AG04449 (cell line): ENCODE measurements at regions of chr7 and their contacts with region 1.

Region 1: DNA sequence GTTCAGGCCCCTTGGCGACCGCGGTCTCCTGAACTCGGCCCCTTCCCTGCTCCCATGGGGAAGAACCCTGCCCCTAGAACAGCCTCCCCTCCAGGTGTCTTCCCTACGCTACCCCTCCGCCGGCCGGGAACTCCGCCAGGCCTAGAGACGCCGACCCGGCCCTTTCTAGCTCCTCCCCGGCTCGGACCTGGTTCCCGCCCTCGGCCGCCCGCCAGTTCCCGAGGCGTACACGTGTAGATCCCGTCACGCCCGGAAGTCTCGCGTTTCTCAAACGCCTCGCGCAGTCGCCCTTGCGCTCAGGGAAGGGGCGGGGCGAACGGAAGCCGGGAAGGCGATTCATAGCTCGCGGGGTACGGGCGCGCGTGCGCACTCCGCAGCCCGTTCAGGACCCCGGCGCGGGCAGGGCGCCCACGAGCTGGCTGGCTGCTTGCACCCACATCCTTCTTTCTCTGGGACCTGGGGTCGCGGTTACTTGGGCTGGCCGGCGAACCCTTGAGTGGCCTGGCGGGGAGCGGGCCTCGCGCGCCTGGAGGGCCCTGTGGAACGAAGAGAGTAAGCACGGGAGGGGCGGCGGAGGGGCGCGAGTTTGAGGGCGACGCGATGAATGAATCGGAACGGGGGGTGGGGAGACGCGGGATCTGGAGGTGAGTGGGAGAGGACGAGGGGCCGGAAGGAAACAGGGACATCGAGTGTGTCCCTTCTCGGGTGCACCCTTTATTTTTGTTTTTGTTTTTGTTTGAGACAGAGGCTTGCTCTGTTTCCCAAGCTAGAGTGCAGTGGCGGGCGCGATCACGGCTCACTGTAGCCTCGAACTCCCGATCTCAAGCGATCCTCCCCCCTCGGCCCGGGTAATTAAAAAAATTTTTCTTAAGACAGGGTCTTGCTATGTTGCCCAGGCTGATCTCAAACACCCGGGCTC is at the start of gene POP7:
- DNase-seq: peak; percentile 88
- H3K4me3 ChIP-seq: peak within 1 kb of the TSS; percentile 92
- CTCF ChIP-seq: no peak

Region 2: GRCh38 chr7:100563809-100564400 is 142.1 kb before region 1 on chr7:
- CTCF ChIA-PET with region 1: interaction called, 13 read pairs
- POLR2A ChIA-PET with region 1: no interaction called
- DNase-seq: no peak
- H3K4me3 ChIP-seq: no peak overlapping the region
- CTCF ChIP-seq: peak; percentile 92

Region 3: DNA sequence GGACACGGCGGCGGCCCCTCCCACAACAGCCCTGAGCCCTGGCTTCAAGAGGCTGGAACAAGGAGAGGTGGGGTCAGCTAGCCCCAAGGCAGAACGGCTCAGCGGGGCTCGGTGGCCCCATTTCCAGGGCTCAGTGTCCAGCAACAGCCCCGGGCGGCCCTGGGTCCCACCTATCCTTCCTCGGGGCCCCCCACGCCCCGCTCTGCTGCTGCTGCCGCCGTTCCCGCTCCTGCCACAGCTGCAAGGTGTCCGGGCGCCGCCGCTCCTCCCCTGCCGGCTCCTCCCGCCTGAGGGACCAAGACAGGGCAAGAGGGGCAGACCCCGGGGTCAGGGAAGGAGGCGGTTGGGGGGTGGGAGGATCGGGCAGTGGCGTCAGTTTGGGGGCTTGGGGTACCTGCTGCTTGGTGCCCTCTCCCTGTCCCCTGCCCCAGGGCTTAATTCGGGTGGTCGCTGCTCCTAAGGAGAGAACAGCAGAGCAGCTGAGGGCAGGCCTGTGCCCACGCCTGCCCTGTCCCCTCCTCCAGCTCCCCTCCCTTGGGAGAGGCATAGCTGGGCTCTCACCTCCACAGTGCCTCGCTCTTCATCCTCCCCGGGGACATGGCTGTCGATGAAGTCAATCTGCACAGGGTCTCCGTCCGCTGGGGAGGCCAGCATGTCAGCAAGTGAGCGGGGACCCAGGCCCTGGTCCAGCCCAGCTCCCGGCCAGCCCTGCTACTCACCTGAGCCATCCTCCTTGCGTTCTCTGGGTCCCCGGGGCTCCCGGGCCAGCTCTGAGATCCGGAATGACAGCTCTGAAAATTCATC is 128.7 kb before region 1 on chr7:
- CTCF ChIA-PET with region 1: no interaction called
- POLR2A ChIA-PET with region 1: no interaction called
- DNase-seq: no peak
- H3K4me3 ChIP-seq: no peak overlapping the region
- CTCF ChIP-seq: no peak

Region 4: DNA sequence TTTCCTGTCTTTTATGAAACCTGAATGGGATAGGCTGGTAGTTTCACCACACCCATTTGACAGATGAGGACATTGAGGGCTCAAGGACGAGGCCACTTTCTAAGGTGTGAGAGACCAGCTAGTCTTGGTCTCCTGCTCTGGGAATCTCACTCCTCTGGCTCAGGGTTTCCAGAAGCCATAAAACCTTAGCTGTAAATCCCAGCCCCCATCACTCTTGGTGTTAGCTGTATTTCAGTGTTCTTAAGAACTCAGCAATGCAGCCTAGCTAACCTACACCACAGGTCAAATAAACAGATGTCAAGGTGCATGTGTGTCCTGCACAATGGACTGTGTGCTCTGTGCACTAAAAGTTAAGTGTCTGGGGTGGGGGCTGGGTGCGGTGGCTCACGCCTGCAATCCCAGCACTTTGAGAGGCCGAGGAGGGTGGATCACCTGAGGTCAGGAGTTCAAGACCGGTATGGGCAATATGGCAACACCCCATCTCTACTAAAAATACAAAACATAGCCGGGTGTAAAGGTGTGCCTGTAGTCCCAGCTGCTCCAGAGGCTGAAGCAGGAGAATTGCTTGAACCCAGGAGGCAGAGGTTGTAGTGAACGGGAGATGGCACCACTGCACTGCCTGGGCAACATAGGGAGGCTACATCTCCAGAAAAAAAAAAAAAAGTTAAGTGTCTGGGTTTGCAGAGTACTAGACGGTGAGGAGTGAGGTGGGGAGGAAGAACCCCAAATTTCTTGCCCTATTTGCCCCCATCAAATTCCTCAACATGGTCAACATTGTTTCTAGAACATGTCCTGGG is 13.7 kb after region 1 on chr7:
- CTCF ChIA-PET with region 1: interaction called, 20 read pairs
- POLR2A ChIA-PET with region 1: interaction called, 3 read pairs
- DNase-seq: no peak
- H3K4me3 ChIP-seq: no peak overlapping the region
- CTCF ChIP-seq: peak; percentile 47

Region 5: DNA sequence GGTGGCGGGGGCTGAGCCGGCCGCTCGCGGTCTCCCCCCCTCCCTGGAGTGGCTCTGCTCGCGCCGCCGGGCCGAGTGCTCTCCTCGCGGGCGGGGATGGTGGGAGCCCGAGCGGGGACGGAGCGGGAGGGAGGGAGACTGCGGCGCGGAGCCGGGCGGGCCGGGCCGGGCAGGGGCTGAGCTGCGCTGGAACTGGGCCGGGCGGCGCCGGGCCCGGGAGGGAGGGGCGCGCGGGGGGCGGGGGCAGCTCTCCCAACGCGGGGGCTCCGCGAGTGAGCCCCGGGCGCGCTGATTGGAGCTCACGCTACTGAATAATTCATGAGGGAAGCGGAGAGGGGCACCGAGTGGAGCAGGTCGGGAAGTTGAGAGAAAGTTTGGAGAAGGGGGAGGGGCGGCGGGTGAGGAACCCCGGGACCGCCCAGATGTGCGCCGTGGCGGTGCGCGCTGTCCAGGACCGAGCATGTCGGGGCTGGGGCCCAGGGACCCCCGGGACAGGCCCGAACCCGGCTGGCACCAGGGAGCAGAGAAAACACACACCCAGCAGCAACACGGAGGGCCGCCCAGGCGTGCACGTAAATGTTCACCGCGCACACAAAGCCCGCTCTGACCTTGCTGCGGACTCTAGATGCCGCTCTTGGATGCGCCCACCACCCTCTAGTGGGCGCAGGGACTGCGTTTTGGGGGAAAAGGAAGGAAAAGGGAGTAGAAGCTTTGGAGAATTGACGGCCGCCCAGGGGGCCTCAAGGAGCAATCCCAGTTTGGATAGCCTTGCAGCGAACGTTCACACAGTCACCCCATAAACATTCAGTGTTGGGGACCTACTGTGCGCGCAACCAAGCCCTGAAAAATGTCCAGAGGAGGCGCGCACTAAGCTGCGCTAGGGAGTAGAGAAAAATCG is 121.6 kb after region 1 on chr7 and contains the start of gene EPHB4:
- CTCF ChIA-PET with region 1: interaction called, 52 read pairs
- POLR2A ChIA-PET with region 1: interaction called, 10 read pairs
- DNase-seq: no peak
- H3K4me3 ChIP-seq: peak within 1 kb of the TSS; percentile 74
- CTCF ChIP-seq: peak; percentile 61

Region 6: DNA sequence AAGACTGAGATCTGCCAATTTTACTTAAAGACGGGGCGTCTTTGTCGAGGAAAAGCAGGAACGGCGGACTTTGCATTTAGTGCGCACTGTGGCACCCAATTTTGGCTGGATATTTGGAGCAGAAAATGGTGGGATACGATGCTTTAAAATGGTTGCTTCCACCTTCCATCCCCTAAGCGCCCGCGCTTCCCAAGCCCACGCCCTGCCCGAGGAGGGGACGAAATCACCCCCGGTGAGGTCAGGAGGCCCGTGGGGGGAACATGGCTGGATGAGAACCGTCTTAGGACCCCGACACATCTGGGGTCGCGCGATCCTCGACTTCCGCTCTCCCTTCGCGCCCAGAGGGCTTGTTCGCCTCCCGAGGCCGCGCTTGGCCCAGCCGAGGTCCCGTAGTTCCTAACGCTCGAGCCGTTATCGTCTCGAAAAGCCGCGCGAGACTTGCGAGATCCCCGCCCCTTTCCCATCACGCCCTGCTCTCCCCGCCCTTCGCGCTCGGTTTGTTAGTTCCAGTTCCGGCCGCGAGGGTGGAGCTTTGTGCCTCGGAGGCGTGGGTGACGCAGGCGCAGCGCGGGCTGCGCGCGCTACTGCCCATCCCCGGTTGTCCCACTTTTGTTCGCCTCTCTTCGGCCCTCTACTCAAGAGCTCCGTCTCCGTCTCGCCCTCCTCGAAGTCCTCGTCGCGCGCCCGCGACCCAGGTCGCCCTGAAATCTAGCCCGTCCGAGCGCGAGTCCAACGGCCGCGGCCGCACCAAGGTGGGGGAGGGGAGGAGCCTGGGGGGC is 168.8 kb after region 1 on chr7 and contains the start of gene SRRT:
- CTCF ChIA-PET with region 1: interaction called, 10 read pairs
- POLR2A ChIA-PET with region 1: interaction called, 12 read pairs
- DNase-seq: peak; percentile 82
- H3K4me3 ChIP-seq: peak within 1 kb of the TSS; percentile 91
- CTCF ChIP-seq: peak; percentile 33

Region 7: DNA sequence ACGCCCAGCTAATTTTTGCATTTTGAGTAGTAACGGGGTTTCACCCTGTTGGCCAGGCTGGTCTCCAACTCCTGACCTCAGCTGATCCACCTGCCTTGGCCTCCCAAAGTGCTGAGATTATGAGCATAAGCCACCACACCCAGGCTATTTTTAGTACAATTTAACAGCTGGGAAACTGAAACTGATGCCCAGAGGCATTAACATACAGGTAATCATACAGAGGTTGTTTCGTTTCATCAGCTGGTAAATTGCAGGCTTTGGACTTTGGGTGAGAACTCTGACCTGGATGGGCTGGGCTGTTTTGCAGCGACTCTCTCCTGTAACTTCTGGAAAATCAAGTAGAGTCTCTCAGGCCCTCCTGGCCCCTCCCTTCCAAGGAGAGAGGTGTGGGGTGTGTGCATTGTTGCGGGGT is 195.9 kb after region 1 on chr7:
- CTCF ChIA-PET with region 1: no interaction called
- POLR2A ChIA-PET with region 1: no interaction called
- DNase-seq: no peak
- H3K4me3 ChIP-seq: no peak overlapping the region
- CTCF ChIP-seq: no peak